ENCODE measurements at regions of chr1 and their contacts with region 1.

Region 1: GRCh38 chr1:22547818-22548462 is 15.3 kb upstream of the EPHA8 start:
- DNase-seq: no peak

Region 2: DNA sequence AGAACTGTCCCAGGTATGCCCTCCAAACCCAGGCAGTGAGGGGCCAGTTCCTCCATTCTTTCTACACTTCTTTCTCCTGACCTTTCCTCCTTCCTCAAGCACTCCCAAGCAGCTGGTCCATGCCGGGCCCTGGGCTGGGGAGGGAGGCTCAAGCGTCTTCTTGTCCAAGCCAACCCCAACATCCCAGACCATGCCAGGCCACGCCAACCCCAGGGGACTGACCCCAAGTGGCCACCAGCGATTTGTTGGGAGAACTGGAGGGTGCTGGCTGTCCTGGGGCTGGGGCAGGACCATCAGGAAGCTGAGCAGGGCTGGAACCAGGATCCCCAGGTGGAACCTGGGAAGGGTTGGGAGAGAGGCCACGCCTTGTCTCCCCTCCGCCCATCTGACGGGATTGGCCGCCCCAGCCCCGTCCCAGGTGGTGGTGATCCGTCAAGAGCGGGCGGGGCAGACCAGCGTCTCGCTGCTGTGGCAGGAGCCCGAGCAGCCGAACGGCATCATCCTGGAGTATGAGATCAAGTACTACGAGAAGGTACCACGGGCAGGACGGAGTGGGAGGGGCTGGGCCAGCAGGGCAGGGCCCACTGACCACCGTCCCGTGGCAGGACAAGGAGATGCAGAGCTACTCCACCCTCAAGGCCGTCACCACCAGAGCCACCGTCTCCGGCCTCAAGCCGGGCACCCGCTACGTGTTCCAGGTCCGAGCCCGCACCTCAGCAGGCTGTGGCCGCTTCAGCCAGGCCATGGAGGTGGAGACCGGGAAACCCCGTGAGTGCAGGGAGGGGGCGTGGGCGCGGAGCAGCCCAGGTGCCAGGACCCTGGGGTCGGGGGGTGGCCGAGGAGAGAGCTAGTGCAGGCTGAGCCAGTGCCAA is 45.2 kb after region 1 on chr1:
- intact Hi-C with region 1: loop called in 1 of 2 experiments (anchors 1 kb)
- DNase-seq: no peak